CD4-positive, alpha-beta memory T cell (primary cell): ENCODE measurements at regions of chr11 and their contacts with region 1.

Region 1: GRCh38 chr11:57741132-57742086 is at the start of gene SELENOH:
- DNase-seq: peak; percentile 90 to 96 (median 91)
- H3K4me3 ChIP-seq: peak within 1 kb of the TSS; percentile 77 to 80
- H3K4me3 Mint-ChIP-seq: peak within 1 kb of the TSS; percentile 90 to 100 (median 98)
- H3K27ac ChIP-seq: peak within 1 kb of the TSS; percentile 82
- H3K27ac Mint-ChIP-seq: peak within 1 kb of the TSS; percentile 96 to 100 (median 99)
- H3K4me1 ChIP-seq: peaks cover 26% of the 10 kb centered on the region
- H3K4me1 Mint-ChIP-seq: peaks cover 18 to 36% (median 28%) of the 10 kb centered on the region in 4 donors
- H3K27me3 ChIP-seq: no peaks in the 10 kb centered on the region
- H3K27me3 Mint-ChIP-seq: no peaks in the 10 kb centered on the region
- total RNA-seq, gene SELENOH: 102 to 113 TPM

Region 2: GRCh38 chr11:57335343-57336110 is 405.9 kb before region 1 on chr11 and contains the start of gene SSRP1:
- CTCF ChIA-PET with region 1: no interaction called
- POLR2A ChIA-PET with region 1: interaction called, 9 read pairs
- intact Hi-C with region 1: loop called (anchors 1 kb)
- DNase-seq: peak; percentile 87 to 92 (median 88)
- H3K4me3 ChIP-seq: peak within 1 kb of the TSS; percentile 55 to 87
- H3K4me3 Mint-ChIP-seq: peak within 1 kb of the TSS; percentile 86 to 98 (median 94)
- H3K27ac ChIP-seq: peak within 1 kb of the TSS; percentile 85
- H3K27ac Mint-ChIP-seq: peak within 1 kb of the TSS; percentile 96 to 99 (median 98)
- H3K4me1 ChIP-seq: peaks cover 25% of the 10 kb centered on the region
- H3K4me1 Mint-ChIP-seq: peaks cover 23 to 29% (median 25%) of the 10 kb centered on the region in 4 donors
- H3K27me3 ChIP-seq: no peaks in the 10 kb centered on the region
- H3K27me3 Mint-ChIP-seq: no peaks in the 10 kb centered on the region
- total RNA-seq, gene SSRP1: 69.0 to 74.3 TPM

Region 3: DNA sequence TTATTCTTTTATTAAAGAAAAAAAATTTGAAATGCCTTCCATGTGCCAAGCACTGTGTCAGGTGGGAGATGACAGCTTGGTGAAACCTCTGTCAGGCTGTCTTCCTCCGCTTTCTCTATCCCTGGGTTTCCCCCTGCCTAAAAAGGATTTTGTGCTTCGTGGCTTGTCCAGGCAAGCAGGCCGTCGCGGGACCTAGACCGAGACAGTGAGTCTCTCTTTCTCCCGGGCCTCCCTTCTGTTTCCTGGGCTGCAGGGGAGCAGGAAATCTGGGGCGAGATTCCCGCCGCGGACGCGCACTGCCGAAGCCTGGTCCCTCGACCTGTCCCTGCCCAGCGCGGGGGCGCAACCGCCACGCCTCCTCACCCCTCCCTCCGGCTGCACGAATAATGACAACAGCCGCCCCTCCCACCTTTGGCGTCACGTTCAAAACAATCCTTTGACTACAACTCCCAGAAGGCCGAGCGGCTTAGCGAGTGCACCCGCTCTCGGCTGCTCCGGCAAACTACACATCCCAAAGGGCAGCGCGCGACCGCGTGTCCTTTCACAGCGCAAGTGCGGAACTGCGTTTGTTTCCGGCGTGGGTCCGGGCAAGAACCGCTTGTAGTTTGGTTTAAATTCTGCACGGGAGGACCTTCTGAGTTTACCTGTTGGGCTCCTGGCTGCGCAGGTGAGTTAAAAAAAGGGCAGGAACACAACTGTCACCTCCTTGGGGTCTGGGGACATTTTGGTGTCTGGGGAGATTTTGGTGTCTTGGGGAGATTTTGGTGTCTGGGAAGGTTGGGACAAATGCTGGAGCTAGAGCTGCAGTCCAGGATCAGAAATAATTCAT is 84.0 kb before region 1 on chr11 and contains the start of gene CLP1:
- CTCF ChIA-PET with region 1: no interaction called
- POLR2A ChIA-PET with region 1: interaction called, 10 read pairs
- intact Hi-C with region 1: loop called (anchors 1 kb)
- DNase-seq: peak; percentile 98 to 99 (median 98)
- H3K4me3 ChIP-seq: peak within 1 kb of the TSS; percentile 91 to 96
- H3K4me3 Mint-ChIP-seq: peak within 1 kb of the TSS; percentile 94 to 100 (median 98)
- H3K27ac ChIP-seq: peak within 1 kb of the TSS; percentile 84
- H3K27ac Mint-ChIP-seq: peak within 1 kb of the TSS; percentile 86 to 100 (median 97)
- H3K4me1 ChIP-seq: peaks cover 16% of the 10 kb centered on the region
- H3K4me1 Mint-ChIP-seq: peaks cover 15 to 30% (median 27%) of the 10 kb centered on the region in 4 donors
- H3K27me3 ChIP-seq: no peaks in the 10 kb centered on the region
- H3K27me3 Mint-ChIP-seq: no peaks in the 10 kb centered on the region
- total RNA-seq, gene CLP1: 14.1 to 16.0 TPM

Region 4: DNA sequence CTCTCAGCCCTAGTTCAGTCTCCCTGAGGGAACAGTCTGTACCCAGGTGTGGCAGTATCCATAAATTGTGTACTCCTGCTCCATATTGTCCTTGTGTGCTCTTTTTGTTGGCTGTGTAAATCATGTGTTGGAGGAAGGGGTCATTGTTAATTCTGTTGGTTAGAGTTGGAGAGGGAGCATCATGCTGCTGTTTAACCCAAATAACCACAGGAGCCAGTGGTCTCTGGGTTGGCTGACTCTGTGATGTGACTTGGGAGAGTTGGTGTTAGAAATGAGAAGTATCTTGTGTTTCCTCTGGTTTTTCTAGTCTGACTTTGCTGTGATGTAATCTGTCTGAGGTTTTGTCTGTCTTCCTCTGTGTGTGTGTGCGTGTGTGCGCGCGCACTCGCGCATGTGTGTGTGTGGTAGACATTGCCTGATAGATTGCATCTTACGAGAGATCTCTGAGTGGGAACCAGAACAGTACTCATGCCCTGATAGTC is 50.7 kb after region 1 on chr11:
- CTCF ChIA-PET with region 1: no interaction called
- POLR2A ChIA-PET with region 1: interaction called, 20 read pairs
- intact Hi-C with region 1: loop called (anchors 1 kb)
- DNase-seq: peak; percentile 84 to 93 (median 88)
- H3K4me3 ChIP-seq: peak overlapping the region in 1 of 2 donors; percentile 23
- H3K4me3 Mint-ChIP-seq: peak overlapping the region; percentile 58 to 87 (median 76)
- H3K27ac ChIP-seq: peak overlapping the region; percentile 61
- H3K27ac Mint-ChIP-seq: peak overlapping the region; percentile 84 to 99 (median 97)
- H3K4me1 ChIP-seq: peaks cover 35% of the 10 kb centered on the region
- H3K4me1 Mint-ChIP-seq: peaks cover 26 to 39% (median 32%) of the 10 kb centered on the region in 4 donors
- H3K27me3 ChIP-seq: no peaks in the 10 kb centered on the region
- H3K27me3 Mint-ChIP-seq: no peaks in the 10 kb centered on the region